Vagina (tissue), 2 donors: ENCODE measurements at regions of chr17 and their contacts with region 1.

Region 1: DNA sequence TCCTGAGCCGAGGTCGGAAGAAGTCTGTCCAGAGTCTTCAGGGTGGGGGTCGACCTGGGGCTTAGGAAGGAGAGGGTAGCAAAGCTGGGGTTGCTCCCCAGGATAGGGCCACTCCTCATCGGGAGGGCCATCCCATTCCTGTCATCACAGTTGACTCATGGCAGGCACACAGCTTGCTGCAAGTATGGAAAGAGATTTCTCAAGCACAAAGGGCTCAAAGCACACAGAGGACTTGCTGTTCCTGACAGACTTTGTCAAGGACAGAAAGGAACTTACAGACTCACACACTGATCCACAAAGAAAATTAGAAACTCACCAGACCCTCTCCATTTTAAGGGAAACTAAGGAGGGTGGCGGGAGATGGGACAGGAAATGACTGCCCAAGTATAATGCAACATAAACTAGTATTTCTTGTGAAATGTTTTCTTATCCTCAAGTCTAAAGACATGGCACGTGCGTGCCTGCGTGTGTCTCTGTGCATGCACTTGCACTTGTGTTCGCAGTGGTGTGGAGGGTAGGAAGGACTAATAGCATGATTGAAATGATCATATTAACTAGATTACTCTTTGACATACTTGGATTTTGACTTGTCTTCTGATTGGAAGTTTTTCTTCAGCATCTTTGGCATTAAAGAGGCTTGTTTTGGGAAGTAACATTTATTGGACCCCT is 2.4 kb downstream of the AOC2 start:
- DNase-seq: no peak
- H3K4me3 ChIP-seq: no peak overlapping the region
- H3K27ac ChIP-seq: no peak overlapping the region
- H3K4me1 ChIP-seq: peaks cover 23% of the 10 kb centered on the region
- H3K27me3 ChIP-seq: no peaks in the 10 kb centered on the region
- CTCF ChIP-seq: no peak
- POLR2A ChIP-seq: no peak

Region 2: GRCh38 chr17:42798383-42799380 is 48.1 kb before region 1 on chr17 and contains the starts of genes CNTD1 and COA3:
- intact Hi-C with region 1: no loop called
- DNase-seq: no peak
- H3K4me3 ChIP-seq: peak within 1 kb of the TSS; percentile 74 to 83
- H3K27ac ChIP-seq: peak within 1 kb of the TSS; percentile 74
- H3K4me1 ChIP-seq: peaks cover 31% of the 10 kb centered on the region
- H3K27me3 ChIP-seq: no peaks in the 10 kb centered on the region
- CTCF ChIP-seq: no peak
- POLR2A ChIP-seq: no peak
- total RNA-seq, gene CNTD1: not detected
- total RNA-seq, gene COA3: 89.4 TPM

Region 3: DNA sequence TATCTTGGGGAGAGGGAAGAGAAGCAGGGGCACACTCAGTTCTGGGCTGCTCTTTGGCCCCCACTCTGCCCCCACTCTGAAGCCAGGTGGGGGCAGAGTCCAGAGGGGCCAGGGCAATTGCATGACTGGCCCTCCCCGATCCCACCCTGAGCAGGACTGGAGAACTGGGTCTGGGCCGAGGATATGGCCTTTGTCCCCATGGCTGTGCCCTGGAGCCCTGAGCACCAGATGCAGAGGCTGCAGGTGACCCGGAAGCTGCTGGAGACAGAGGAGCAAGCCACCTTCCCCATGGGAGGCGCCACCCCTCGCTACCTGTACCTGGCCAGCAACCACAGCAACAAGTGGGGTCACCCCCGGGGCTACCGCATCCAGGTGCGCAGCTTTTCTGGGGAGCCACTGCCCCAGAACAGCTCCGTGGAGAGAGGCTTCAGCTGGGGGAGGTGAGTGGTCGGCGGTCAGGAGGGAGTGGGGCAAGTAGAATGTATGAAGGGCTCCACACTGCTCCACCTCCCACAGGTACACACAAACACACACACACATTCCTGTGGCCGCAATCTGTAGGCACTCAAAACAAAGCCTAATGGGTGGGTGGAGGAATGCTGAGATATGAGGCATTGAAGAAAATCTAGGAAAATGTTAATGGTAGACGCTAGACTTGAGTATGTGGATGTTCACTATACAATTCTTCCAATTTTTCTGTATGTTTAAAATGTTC is 25.7 kb after region 1 on chr17:
- intact Hi-C with region 1: no loop called
- DNase-seq: no peak
- H3K4me3 ChIP-seq: no peak overlapping the region
- H3K27ac ChIP-seq: no peak overlapping the region
- H3K4me1 ChIP-seq: no peaks in the 10 kb centered on the region
- H3K27me3 ChIP-seq: no peaks in the 10 kb centered on the region
- CTCF ChIP-seq: no peak
- POLR2A ChIP-seq: no peak

Region 4: GRCh38 chr17:42920922-42921321 is 74.2 kb after region 1 on chr17:
- intact Hi-C with region 1: no loop called
- DNase-seq: no peak
- H3K4me3 ChIP-seq: no peak overlapping the region
- H3K27ac ChIP-seq: no peak overlapping the region
- H3K4me1 ChIP-seq: no peaks in the 10 kb centered on the region
- H3K27me3 ChIP-seq: no peaks in the 10 kb centered on the region
- CTCF ChIP-seq: no peak
- POLR2A ChIP-seq: no peak

Region 5: DNA sequence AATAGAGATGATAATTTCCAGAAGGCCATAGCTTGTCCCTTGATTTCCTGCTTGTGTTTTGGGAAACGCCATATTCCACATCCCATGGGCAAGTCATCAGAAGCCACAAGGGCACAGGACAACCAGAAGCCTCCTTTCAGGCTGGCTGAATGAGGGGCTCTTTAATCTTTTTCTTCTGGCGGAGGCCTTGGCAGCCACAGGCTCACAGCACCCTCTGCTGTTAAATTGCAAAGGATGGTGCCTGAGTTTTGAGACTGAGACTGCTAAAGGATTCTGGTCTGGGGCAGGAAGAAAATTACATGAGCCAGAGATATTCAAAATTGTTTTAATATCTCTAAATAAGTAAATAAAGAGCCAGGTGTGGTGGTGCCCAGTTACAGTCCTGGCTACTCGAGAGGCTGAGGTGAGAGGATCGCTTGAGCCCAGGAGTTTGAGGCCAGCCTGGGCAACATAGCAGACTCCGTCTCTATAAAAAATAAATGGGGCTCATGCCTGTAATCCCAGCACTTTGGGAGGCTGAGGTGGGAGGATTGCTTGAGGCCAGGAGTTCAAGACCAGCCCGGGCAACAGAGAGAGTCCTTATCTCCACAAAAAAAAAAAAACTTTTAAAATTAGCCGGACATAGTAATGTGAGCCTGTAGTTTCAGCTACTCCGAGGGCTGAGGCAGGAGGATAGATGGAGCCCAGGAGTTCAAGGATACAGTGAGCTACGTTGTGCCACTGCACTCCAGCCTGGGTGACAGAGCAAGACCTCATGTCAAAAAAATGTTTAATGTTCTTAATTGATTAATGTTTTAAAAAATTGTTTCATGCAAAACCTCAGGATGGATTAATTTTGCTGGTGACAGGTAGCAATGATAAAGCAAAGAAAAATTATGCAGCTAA is 91.2 kb after region 1 on chr17:
- intact Hi-C with region 1: loop called (anchors 2 kb)
- DNase-seq: no peak
- H3K4me3 ChIP-seq: no peak overlapping the region
- H3K27ac ChIP-seq: no peak overlapping the region
- H3K4me1 ChIP-seq: no peaks in the 10 kb centered on the region
- H3K27me3 ChIP-seq: no peaks in the 10 kb centered on the region
- CTCF ChIP-seq: peak; percentile 34 to 54 (median 38)
- POLR2A ChIP-seq: no peak